Activated naive CD4-positive, alpha-beta T cell treated with anti-CD3 and anti-CD28 coated beads for 36 hours (primary cell): ENCODE measurements at regions of chr1 and their contacts with region 1.

Region 1: GRCh38 chr1:208245185-208245705 is 1.1 kb upstream of the PLXNA2 start:
- DNase-seq: peak; percentile 92
- H3K4me3 Mint-ChIP-seq: peak overlapping the region; percentile 70
- H3K27ac Mint-ChIP-seq: no peak overlapping the region
- H3K4me1 Mint-ChIP-seq: peaks cover 10% of the 10 kb centered on the region
- H3K27me3 Mint-ChIP-seq: peaks cover 25% of the 10 kb centered on the region

Region 2: DNA sequence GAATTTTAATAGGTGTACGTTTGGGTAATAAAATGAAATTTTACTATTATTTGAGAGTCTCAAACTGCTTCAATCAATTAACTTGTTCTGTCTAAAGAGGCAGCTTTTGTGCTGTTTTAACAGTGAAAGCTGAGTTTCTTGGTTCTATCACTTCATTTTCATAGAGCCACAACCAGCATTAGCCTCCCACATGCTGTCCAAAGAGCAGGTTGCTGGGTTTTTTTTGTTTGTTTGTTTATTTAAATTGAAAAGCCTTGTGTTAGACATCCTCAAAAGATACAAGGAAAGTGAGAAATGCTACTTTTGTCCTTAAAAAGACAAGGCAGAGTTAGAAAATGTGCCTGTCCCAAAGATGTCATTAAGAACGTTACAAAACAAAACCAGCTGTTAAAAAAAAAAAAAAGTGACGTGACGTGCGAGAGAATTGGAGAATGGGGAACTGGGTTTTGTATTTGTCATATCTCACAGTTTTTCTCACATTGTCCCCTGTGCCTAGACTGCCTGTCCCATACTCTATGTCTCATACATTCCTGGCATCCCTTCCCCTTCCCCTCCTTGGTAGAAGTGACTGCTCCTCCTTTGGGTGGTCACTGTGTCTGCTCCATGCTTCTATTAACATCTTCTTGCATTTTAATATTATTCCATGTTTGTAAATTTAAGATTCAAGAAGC is 271.2 kb before region 1 on chr1:
- CTCF ChIA-PET with region 1: no interaction called
- intact Hi-C with region 1: no loop called
- DNase-seq: no peak
- H3K4me3 Mint-ChIP-seq: no peak overlapping the region
- H3K27ac Mint-ChIP-seq: no peak overlapping the region
- H3K4me1 Mint-ChIP-seq: no peaks in the 10 kb centered on the region
- H3K27me3 Mint-ChIP-seq: peaks cover 10% of the 10 kb centered on the region

Region 3: GRCh38 chr1:208085655-208086515 is 159.4 kb before region 1 on chr1:
- CTCF ChIA-PET with region 1: interaction called, 8 read pairs
- intact Hi-C with region 1: loop called (anchors 2 kb)
- DNase-seq: no peak
- H3K4me3 Mint-ChIP-seq: peak overlapping the region; percentile 70
- H3K27ac Mint-ChIP-seq: peak overlapping the region; percentile 77
- H3K4me1 Mint-ChIP-seq: peaks cover 28% of the 10 kb centered on the region
- H3K27me3 Mint-ChIP-seq: no peaks in the 10 kb centered on the region